CD8-positive, alpha-beta memory T cell (primary cell): ENCODE measurements at regions of chr9 and their contacts with region 1.

Region 1: GRCh38 chr9:97921959-97922724 is at the start of gene TRMO:
- DNase-seq: peak; percentile 97 to 99 (median 98)
- H3K4me3 ChIP-seq: peak within 1 kb of the TSS; percentile 92
- H3K4me3 Mint-ChIP-seq: peak within 1 kb of the TSS; percentile 87 to 96 (median 90)
- H3K27ac ChIP-seq: peak within 1 kb of the TSS; percentile 100
- H3K27ac Mint-ChIP-seq: peak within 1 kb of the TSS; percentile 98 to 100 (median 99)
- H3K4me1 ChIP-seq: peaks cover 47% of the 10 kb centered on the region
- H3K4me1 Mint-ChIP-seq: peaks cover 48 to 59% (median 49%) of the 10 kb centered on the region in 3 donors
- H3K27me3 ChIP-seq: no peaks in the 10 kb centered on the region
- H3K27me3 Mint-ChIP-seq: peaks cover 0 to 9% of the 10 kb centered on the region in 2 donors
- total RNA-seq, gene TRMO: 19.1 to 19.2 TPM

Region 2: GRCh38 chr9:97900738-97901565 is 21.2 kb before region 1 on chr9:
- CTCF ChIA-PET with region 1: interaction called, 109 read pairs
- POLR2A ChIA-PET with region 1: interaction called, 55 read pairs
- DNase-seq: peak in 2 of 5 donors; percentile 33 to 51
- H3K4me3 ChIP-seq: no peak overlapping the region
- H3K4me3 Mint-ChIP-seq: peak overlapping the region in 1 of 7 donors; percentile 37
- H3K27ac ChIP-seq: no peak overlapping the region
- H3K27ac Mint-ChIP-seq: peak overlapping the region; percentile 57 to 97 (median 85)
- H3K4me1 ChIP-seq: peaks cover 56% of the 10 kb centered on the region
- H3K4me1 Mint-ChIP-seq: peaks cover 46 to 60% (median 53%) of the 10 kb centered on the region in 3 donors
- H3K27me3 ChIP-seq: no peaks in the 10 kb centered on the region
- H3K27me3 Mint-ChIP-seq: no peaks in the 10 kb centered on the region

Region 3: DNA sequence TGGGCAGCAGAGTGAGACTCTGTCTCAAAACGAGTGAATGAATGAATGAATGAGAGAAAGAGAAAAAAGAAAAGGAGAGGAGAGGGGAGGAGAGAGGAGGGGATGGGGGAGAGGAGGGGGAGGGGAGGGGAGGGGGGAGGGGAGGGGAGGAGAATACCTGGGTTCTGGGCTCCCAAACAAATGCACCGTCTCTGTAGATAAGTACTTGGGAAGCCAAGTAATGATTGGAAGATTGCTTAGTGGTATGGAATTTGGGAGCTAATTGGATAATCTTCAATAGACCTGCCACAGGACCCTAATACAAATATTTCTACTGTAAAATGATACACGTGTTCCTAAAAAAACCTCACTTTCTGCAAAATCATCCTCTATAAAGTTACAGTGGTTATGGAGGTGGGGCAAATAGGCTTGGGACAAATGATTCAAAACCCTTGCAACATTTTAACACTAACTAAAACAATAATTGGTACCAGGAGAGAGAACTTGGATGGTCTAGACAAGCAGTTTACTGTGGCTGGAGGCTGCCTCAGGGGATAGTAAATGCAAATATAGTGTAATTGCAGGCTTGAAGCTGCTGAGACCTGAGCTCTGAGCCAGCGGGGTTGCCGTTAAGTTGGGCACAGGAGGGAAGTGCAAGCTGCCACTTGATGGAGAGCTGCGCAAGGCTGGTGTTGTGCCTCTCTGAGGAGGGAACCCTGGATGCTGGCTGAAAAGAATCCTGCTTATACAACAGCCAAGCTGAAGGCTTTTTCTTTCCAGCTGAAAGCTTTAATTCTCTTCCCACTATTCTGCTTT is 12.4 kb after region 1 on chr9:
- CTCF ChIA-PET with region 1: interaction called, 18 read pairs
- POLR2A ChIA-PET with region 1: interaction called, 6 read pairs
- DNase-seq: no peak
- H3K4me3 ChIP-seq: no peak overlapping the region
- H3K4me3 Mint-ChIP-seq: no peak overlapping the region
- H3K27ac ChIP-seq: peak overlapping the region; percentile 28
- H3K27ac Mint-ChIP-seq: no peak overlapping the region
- H3K4me1 ChIP-seq: peaks cover 57% of the 10 kb centered on the region
- H3K4me1 Mint-ChIP-seq: peaks cover 37 to 52% (median 47%) of the 10 kb centered on the region in 3 donors
- H3K27me3 ChIP-seq: no peaks in the 10 kb centered on the region
- H3K27me3 Mint-ChIP-seq: no peaks in the 10 kb centered on the region

Region 4: GRCh38 chr9:98034593-98035546 is 112.7 kb after region 1 on chr9:
- CTCF ChIA-PET with region 1: interaction called, 109 read pairs
- POLR2A ChIA-PET with region 1: interaction called, 6 read pairs
- DNase-seq: peak; percentile 76 to 93 (median 88)
- H3K4me3 ChIP-seq: no peak overlapping the region
- H3K4me3 Mint-ChIP-seq: peak overlapping the region in 5 of 7 donors; percentile 6 to 56 (median 27)
- H3K27ac ChIP-seq: no peak overlapping the region
- H3K27ac Mint-ChIP-seq: peak overlapping the region in 6 of 8 donors; percentile 17 to 90 (median 30)
- H3K4me1 ChIP-seq: peaks cover 7% of the 10 kb centered on the region
- H3K4me1 Mint-ChIP-seq: peaks cover 6 to 8% (median 8%) of the 10 kb centered on the region in 3 donors
- H3K27me3 ChIP-seq: no peaks in the 10 kb centered on the region
- H3K27me3 Mint-ChIP-seq: peaks cover 0 to 14% of the 10 kb centered on the region in 2 donors

Region 5: GRCh38 chr9:98255578-98256296 is 333.6 kb after region 1 on chr9 and contains the start of gene TBC1D2:
- CTCF ChIA-PET with region 1: interaction called, 17 read pairs
- POLR2A ChIA-PET with region 1: interaction called, 29 read pairs
- DNase-seq: peak; percentile 97 to 98 (median 97)
- H3K4me3 ChIP-seq: peak within 1 kb of the TSS; percentile 99
- H3K4me3 Mint-ChIP-seq: peak within 1 kb of the TSS; percentile 84 to 98 (median 91)
- H3K27ac ChIP-seq: peak within 1 kb of the TSS; percentile 91
- H3K27ac Mint-ChIP-seq: peak within 1 kb of the TSS; percentile 87 to 98 (median 94)
- H3K4me1 ChIP-seq: peaks cover 22% of the 10 kb centered on the region
- H3K4me1 Mint-ChIP-seq: peaks cover 30 to 41% (median 38%) of the 10 kb centered on the region in 3 donors
- H3K27me3 ChIP-seq: no peaks in the 10 kb centered on the region
- H3K27me3 Mint-ChIP-seq: no peaks in the 10 kb centered on the region
- total RNA-seq, gene TBC1D2: 3.3 to 4.8 TPM